SK-N-SH (cell line): ENCODE measurements at regions of chr13 and their contacts with region 1.

Region 1: DNA sequence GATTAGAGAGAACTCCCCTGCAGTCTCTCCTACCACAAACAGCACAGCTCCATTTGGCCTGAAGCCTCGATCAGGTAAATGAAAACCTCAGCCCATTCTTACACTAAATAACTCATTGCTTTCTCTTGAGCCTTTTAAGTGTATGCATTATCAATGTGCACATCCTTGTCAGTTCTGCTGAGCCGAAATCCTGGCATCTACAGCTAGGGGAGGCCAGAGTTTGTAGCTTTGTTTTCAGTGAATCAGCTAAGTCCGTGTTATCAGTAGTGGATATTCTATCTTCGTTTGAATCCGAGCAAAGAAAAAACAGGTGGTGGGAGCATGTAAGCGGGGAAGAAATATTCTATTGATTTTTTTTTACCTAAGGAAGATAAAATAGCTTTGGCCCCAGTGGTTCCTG is 84.4 kb downstream of the ESD start:
- DNase-seq: no peak
- H3K4me3 ChIP-seq: no peak overlapping the region
- H3K27ac ChIP-seq: no peak overlapping the region
- H3K4me1 ChIP-seq: peaks cover 0 to 19% of the 10 kb centered on the region in 2 experiments; a peak in 3 of 4 replicates
- H3K27me3 ChIP-seq: no peaks in the 10 kb centered on the region
- CTCF ChIP-seq: no peak
- EP300 ChIP-seq: no peak
- RAD21 ChIP-seq: no peak

Region 2: DNA sequence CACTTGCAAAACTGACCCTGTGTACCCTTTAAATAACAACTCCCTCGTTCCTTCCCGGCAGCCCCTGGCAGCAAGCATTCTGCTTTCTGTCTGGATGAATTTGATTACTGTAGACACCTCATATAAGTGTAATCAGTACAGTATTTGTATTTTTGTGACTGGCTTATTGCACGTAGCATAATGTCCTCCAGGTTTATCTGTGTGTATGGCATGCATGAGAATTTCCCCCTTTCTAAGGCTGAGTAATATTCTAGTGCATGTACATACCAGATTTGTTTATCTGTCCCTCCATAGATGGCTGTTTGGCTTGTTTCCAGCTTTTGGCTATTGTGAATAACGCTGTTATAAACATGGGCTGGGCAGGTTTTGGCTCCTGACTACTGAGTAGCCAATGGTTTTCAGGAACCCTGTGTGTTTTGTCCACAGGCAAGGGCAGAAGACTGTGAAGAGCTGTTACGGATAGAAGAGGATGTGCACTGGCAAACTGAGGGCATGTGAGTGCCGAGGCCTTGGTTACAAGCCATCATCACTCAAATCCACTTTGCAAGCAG is 13.5 kb before region 1 on chr13:
- CTCF ChIA-PET with region 1: interaction called, 10 read pairs
- POLR2A ChIA-PET with region 1: interaction called, 3 read pairs
- DNase-seq: peak; percentile 19
- H3K4me3 ChIP-seq: no peak overlapping the region
- H3K27ac ChIP-seq: peak overlapping the region in 1 of 2 experiments; percentile 54; a peak in 2 of 4 replicates
- H3K4me1 ChIP-seq: peaks cover 0 to 18% of the 10 kb centered on the region in 2 experiments; a peak in 2 of 4 replicates
- H3K27me3 ChIP-seq: no peaks in the 10 kb centered on the region
- CTCF ChIP-seq: no peak
- EP300 ChIP-seq: no peak
- RAD21 ChIP-seq: no peak